GM23248 (cell line): ENCODE measurements at regions of chr11 and their contacts with region 1.

Region 1: DNA sequence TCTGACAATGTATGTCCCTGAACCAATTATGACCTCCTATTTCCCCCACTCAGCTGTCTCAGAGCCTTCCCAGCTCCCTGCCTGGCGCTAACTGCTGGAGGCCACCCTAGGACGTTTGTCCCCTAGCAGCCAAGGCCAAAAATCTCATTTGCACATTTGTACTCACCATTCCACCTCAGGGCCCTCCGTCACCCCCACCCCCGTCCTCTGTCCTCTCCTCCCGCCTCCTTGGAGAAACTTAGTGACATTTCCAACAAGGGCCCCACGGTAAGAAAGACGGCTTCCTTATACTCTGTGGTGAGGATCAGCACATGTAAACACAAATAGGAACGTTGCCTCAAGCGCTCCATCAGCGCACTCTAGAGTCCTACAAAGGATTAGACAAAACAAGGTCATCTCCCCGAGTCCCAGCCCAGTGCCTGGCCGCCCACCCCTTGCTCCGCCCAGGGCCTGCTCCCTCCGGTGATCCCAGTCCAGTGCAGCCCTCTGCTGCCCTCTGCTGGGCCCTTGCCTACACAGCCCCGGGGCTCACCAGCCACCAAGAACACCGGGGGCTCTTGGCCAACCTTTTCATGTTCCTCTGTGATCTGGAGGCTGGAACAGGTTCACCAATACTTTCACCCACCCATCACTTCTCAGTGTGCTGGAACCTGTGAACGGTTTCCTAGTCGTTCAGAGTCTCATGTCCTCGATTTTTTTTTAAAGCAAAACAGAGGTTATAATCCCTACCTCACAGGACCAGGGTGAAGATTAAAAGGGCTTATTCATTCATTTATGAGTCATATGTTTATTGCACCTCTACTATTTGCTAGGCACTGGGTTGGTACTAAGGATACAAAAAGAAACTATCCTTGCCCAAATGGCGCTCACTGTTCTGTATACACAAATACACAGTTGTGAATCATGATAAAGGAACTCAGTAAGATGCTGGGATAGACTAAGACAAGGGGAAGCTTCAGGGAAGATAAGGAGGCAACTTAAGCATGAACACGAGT is 15.3 kb upstream of the CTR9 start:
- DNase-seq: peak; percentile 98
- H3K4me3 ChIP-seq: peak overlapping the region; percentile 73
- H3K27ac ChIP-seq: peak overlapping the region; percentile 72
- H3K4me1 ChIP-seq: peaks cover 13% of the 10 kb centered on the region; the same call in 1 of the 2 replicates
- H3K27me3 ChIP-seq: no peaks in the 10 kb centered on the region

Region 2: GRCh38 chr11:9982800-9983579 is 752.8 kb before region 1 on chr11:
- in situ Hi-C with region 1: loop called (anchors 25 kb)
- DNase-seq: no peak
- H3K4me3 ChIP-seq: no peak overlapping the region
- H3K27ac ChIP-seq: no peak overlapping the region
- H3K4me1 ChIP-seq: peaks cover 12% of the 10 kb centered on the region
- H3K27me3 ChIP-seq: no peaks in the 10 kb centered on the region

Region 3: DNA sequence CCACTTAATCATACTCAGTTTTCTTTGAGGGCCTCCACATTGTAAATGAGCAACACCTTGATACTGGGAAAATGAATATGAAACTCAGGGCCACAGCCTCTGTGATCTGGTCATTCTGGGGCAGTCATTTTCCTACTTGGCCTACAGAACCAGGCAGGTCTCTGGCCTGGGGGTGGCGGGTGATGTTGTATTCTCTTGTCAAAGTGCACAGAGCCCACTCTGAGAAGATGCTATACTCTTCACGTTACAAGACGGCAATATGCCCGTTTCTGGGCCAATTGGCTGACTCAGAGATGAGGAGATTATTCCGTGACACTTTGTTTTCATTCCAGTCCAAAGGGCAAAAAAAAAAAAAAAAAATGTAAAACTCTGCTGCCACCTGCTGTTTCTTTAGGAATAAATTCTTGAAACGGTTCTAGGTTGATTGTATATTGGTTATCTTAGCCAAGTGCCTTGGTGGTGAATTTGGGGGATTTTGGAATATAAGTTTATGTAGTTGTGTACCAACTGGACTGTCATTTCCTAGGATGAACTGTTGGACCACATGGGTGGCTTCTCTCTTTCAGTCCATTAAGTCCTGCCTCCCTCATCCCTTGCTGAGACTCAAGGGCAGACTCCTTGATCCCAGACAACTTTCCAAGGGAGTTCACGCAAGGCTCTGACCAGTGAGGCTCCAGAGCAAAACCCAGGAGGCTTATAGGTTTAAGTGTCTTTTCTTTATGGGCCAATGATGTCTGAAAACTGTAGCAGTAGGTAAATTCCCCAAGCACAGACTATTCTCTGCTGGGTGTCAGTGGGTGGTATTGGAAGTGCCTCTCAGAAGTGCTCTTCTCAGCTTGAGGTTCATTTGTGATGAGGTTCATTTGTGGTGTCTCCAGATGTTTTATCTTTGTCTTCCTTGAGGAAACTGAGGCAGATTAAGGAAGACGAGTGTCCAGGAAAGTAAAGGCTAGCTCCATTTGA is 412.7 kb before region 1 on chr11:
- in situ Hi-C with region 1: loop called (anchors 10 kb)
- DNase-seq: peak; percentile 94
- H3K4me3 ChIP-seq: no peak overlapping the region
- H3K27ac ChIP-seq: peak overlapping the region; percentile 86
- H3K4me1 ChIP-seq: peaks cover 57% of the 10 kb centered on the region
- H3K27me3 ChIP-seq: no peaks in the 10 kb centered on the region

Region 4: GRCh38 chr11:10405855-10406592 is 329.8 kb before region 1 on chr11:
- in situ Hi-C with region 1: loop called (anchors 10 kb)
- DNase-seq: peak; percentile 96
- H3K4me3 ChIP-seq: no peak overlapping the region
- H3K27ac ChIP-seq: peak overlapping the region; percentile 47
- H3K4me1 ChIP-seq: peaks cover 22% of the 10 kb centered on the region
- H3K27me3 ChIP-seq: no peaks in the 10 kb centered on the region

Region 5: DNA sequence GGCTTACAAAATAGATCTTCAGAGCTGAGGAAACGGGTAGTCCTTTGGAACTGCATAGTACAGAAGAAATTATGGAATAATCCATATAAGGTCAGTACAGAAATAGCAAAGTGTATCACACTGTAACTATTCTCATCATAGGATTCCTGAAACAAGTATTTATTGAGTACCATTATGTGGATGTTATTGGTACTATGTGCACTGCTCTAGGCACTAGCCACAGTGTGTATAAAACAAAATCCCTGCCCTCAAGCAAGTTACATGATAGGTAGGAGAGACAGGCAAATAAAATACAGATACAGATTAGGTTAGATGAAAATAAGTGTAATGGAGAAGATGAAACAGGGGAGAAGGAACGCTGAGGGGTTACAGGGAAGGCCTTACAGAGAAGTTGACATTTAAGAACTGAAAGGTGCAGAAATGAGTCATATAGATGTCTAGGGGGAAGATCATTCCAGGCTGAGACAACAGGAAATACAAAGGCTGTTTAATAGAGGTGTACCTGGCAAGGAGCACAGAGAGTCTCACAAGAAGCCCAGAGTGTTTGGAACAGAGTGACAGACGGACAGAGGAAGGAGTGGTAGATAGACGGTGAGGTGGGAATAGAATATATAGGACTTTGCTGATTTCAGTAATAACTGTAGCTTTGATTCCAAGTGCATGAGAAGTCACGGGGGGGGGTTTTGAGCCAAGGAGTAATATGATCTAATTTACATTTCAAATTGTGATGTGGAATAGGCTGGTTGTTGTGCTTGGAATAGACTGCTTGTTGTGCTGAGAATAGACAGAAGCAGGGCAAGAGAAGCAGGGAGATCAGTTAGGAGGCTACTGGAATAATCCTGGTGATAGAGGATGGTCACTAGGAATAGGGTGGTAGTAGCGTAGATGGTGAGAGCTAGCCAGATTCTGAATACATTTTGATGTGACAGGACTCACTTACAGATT is 208.5 kb before region 1 on chr11:
- in situ Hi-C with region 1: loop called (anchors 10 kb)
- DNase-seq: peak; percentile 44
- H3K4me3 ChIP-seq: no peak overlapping the region
- H3K27ac ChIP-seq: 0 out of 2 replicates have a peak overlapping the region, but pooled peaks have one; percentile 22
- H3K4me1 ChIP-seq: peaks cover 42% of the 10 kb centered on the region
- H3K27me3 ChIP-seq: no peaks in the 10 kb centered on the region

Region 6: GRCh38 chr11:10920205-10920604 is 184.4 kb after region 1 on chr11:
- in situ Hi-C with region 1: no loop called
- DNase-seq: peak; percentile 61
- H3K4me3 ChIP-seq: no peak overlapping the region
- H3K27ac ChIP-seq: 0 out of 2 replicates have a peak overlapping the region, but pooled peaks have one; percentile 17
- H3K4me1 ChIP-seq: no peaks in the 10 kb centered on the region
- H3K27me3 ChIP-seq: no peaks in the 10 kb centered on the region

Region 7: GRCh38 chr11:10993186-10993585 is 257.4 kb after region 1 on chr11:
- in situ Hi-C with region 1: no loop called
- DNase-seq: peak; percentile 33
- H3K4me3 ChIP-seq: no peak overlapping the region
- H3K27ac ChIP-seq: no peak overlapping the region
- H3K4me1 ChIP-seq: peaks cover 15% of the 10 kb centered on the region
- H3K27me3 ChIP-seq: peaks cover 16% of the 10 kb centered on the region